Activated naive CD4-positive, alpha-beta T cell treated with anti-CD3 and anti-CD28 coated beads for 36 hours (primary cell): ENCODE measurements at regions of chr9 and their contacts with region 1.

Region 1: DNA sequence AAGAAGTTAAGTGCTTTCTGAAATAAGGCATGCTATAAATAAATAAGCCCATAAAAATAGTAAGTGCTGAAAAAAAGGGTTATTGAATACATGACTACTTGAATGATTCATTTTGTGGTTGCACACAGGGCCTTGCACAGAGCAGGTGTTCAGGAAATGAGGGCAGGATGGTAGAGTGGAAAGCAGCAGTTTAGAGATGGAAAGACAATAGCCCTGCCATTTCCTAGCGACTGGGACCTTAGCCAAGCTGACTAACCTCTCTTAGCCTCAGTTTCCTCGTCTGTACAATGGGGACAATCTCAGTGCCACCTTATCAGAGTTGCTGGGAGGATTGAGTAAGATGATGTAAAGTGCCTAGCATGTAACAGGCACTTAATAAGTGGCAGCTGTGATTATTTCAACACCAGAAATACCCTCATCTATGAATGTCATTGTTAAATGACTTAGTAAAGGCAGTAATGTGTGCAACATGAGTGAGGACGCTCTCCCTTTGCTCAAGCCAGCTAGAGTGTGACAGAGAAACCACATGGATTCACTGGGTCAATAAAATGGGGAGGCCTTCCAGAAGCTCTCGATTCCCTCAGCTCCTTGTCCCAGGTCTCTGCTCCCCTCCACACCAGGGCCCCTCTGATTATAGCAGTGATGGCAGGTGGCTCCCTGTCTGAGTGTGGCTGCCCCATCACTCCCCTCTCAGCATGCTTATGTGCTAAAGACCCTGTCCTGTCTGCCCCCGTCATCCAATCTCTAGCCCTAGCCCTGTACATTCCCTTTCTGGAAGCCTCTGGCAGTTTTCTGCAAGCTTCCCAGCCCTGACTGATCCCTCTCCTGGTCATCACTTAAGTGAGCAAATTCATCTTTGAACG is 16.0 kb upstream of the PHF19 start:
- DNase-seq: peak; percentile 86
- H3K4me3 Mint-ChIP-seq: peak overlapping the region; percentile 70
- H3K27ac Mint-ChIP-seq: peak overlapping the region; percentile 97
- H3K4me1 Mint-ChIP-seq: peaks cover 90% of the 10 kb centered on the region
- H3K27me3 Mint-ChIP-seq: no peaks in the 10 kb centered on the region

Region 2: GRCh38 chr9:120868676-120869359 is 24.2 kb before region 1 on chr9:
- CTCF ChIA-PET with region 1: interaction called, 18 read pairs
- intact Hi-C with region 1: no loop called
- DNase-seq: peak; percentile 97
- H3K4me3 Mint-ChIP-seq: peak overlapping the region; percentile 74
- H3K27ac Mint-ChIP-seq: peak overlapping the region; percentile 87
- H3K4me1 Mint-ChIP-seq: peaks cover 49% of the 10 kb centered on the region
- H3K27me3 Mint-ChIP-seq: no peaks in the 10 kb centered on the region

Region 3: GRCh38 chr9:120875954-120876841 is 16.8 kb before region 1 on chr9:
- CTCF ChIA-PET with region 1: interaction called, 69 read pairs
- intact Hi-C with region 1: loop called (anchors 1 kb)
- DNase-seq: peak; percentile 98
- H3K4me3 Mint-ChIP-seq: peak overlapping the region; percentile 85
- H3K27ac Mint-ChIP-seq: peak overlapping the region; percentile 98
- H3K4me1 Mint-ChIP-seq: peaks cover 75% of the 10 kb centered on the region
- H3K27me3 Mint-ChIP-seq: no peaks in the 10 kb centered on the region

Region 4: GRCh38 chr9:120904061-120904977 is 11.3 kb after region 1 on chr9:
- CTCF ChIA-PET with region 1: interaction called, 5 read pairs
- intact Hi-C with region 1: loop called (anchors 1 kb)
- DNase-seq: peak; percentile 83
- H3K4me3 Mint-ChIP-seq: no peak overlapping the region
- H3K27ac Mint-ChIP-seq: peak overlapping the region; percentile 94
- H3K4me1 Mint-ChIP-seq: peaks cover 88% of the 10 kb centered on the region
- H3K27me3 Mint-ChIP-seq: no peaks in the 10 kb centered on the region

Region 5: GRCh38 chr9:120909904-120910303 is 16.9 kb after region 1 on chr9:
- CTCF ChIA-PET with region 1: interaction called, 5 read pairs
- intact Hi-C with region 1: loop called (anchors 1 kb)
- DNase-seq: peak; percentile 89
- H3K4me3 Mint-ChIP-seq: no peak overlapping the region
- H3K27ac Mint-ChIP-seq: peak overlapping the region; percentile 94
- H3K4me1 Mint-ChIP-seq: peaks cover 91% of the 10 kb centered on the region
- H3K27me3 Mint-ChIP-seq: no peaks in the 10 kb centered on the region

Region 6: DNA sequence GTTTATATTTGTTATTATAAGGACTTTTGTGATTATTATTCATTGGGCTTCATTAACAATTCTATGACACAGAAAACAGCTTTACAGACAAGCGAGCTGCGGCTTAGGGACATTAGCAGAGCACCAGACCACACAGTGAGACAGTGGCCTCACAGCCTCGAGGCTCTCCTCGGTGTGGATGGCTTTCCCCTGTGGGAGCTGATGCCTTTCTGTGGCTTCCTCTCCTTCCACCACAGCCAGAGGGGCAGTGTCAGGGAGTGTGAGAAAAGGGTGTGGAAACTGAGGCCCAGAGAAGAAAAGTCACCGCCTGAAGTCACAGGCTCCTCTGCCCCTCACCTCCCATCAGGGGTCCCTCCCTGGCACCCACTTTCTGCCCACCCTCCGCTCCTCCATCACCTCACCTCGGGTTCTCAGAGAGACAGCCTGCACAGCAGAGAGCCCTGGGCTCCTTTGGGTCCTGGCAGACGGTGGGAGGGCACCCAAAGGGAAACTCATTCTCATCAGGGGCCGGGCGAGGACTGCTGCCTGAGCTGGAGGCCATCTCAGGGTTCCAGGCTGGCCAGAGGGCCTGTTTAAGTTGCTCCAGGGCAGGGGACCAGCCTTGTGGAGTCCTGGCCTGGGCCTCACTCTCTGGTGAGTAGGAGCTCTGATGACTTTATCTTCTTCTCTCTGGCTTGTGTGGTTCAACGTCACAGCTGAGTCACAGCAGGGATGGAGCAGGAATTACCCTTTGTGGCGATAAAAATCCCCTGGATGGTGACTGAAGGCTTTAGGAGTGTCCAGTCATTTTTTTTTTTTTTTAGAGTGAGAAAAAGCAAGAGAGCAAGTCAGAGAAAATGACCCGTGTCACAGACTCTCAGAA is 32.8 kb after region 1 on chr9:
- CTCF ChIA-PET with region 1: interaction called, 8 read pairs
- intact Hi-C with region 1: loop called (anchors 1 kb)
- DNase-seq: peak; percentile 97
- H3K4me3 Mint-ChIP-seq: peak overlapping the region; percentile 92
- H3K27ac Mint-ChIP-seq: peak overlapping the region; percentile 98
- H3K4me1 Mint-ChIP-seq: peaks cover 74% of the 10 kb centered on the region
- H3K27me3 Mint-ChIP-seq: no peaks in the 10 kb centered on the region

Region 7: GRCh38 chr9:120944434-120944843 is 51.5 kb after region 1 on chr9:
- CTCF ChIA-PET with region 1: no interaction called
- intact Hi-C with region 1: no loop called
- DNase-seq: no peak
- H3K4me3 Mint-ChIP-seq: no peak overlapping the region
- H3K27ac Mint-ChIP-seq: no peak overlapping the region
- H3K4me1 Mint-ChIP-seq: no peaks in the 10 kb centered on the region
- H3K27me3 Mint-ChIP-seq: no peaks in the 10 kb centered on the region